Sigmoid colon (tissue), 7 donors: ENCODE measurements at regions of chr2 and their contacts with region 1.

Region 1: GRCh38 chr2:182359990-182360662 is 66.7 kb downstream of the PDE1A start:
- DNase-seq: peak; percentile 82
- H3K4me3 ChIP-seq: peak overlapping the region in 2 of 4 donors; percentile 1 to 12
- H3K27ac ChIP-seq: peak overlapping the region; percentile 42 to 71 (median 66)
- H3K4me1 ChIP-seq: peaks cover 0 to 25% (median 10%) of the 10 kb centered on the region in 4 donors
- H3K27me3 ChIP-seq: no peaks in the 10 kb centered on the region
- CTCF ChIP-seq: no peak
- EP300 ChIP-seq: no peak
- POLR2A ChIP-seq: no peak

Region 2: GRCh38 chr2:182545420-182546167 is 185.5 kb after region 1 on chr2:
- intact Hi-C with region 1: loop called (anchors 10 kb)
- DNase-seq: no peak
- H3K4me3 ChIP-seq: no peak overlapping the region
- H3K27ac ChIP-seq: peak overlapping the region in 3 of 4 donors; percentile 48 to 60 (median 51)
- H3K4me1 ChIP-seq: peaks cover 0 to 43% (median 27%) of the 10 kb centered on the region in 4 donors
- H3K27me3 ChIP-seq: no peaks in the 10 kb centered on the region
- CTCF ChIP-seq: no peak
- EP300 ChIP-seq: no peak
- POLR2A ChIP-seq: no peak

Region 3: DNA sequence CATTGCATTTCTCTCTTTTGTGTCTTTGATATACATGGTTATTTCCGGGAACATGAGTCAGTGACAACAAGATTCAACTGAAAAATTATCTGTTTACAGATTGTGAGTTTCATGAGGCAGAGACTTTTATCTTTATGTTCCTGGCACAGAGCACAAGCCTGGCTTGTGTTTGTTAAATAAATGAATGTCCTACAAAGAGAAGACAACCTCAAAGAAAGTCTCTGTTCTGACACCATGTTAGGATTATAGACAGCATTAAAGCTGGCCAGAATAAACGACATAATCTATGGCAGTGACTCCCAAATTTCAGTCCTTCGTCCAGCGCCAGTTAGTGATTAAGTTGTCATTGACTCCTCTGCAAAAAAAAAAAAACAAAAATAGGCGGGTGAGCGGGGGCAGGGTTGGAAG is 258.6 kb after region 1 on chr2:
- intact Hi-C with region 1: loop called (anchors 2 kb)
- DNase-seq: no peak
- H3K4me3 ChIP-seq: no peak overlapping the region
- H3K27ac ChIP-seq: peak overlapping the region in 1 of 4 donors; percentile 39
- H3K4me1 ChIP-seq: peaks cover 0 to 63% (median 34%) of the 10 kb centered on the region in 4 donors
- H3K27me3 ChIP-seq: no peaks in the 10 kb centered on the region
- CTCF ChIP-seq: no peak
- EP300 ChIP-seq: peak in 2 of 4 donors; percentile 65 to 69
- POLR2A ChIP-seq: no peak

Region 4: GRCh38 chr2:182784777-182785176 is 424.7 kb after region 1 on chr2:
- intact Hi-C with region 1: no loop called
- DNase-seq: no peak
- H3K4me3 ChIP-seq: no peak overlapping the region
- H3K27ac ChIP-seq: no peak overlapping the region
- H3K4me1 ChIP-seq: no peaks in the 10 kb centered on the region
- H3K27me3 ChIP-seq: no peaks in the 10 kb centered on the region
- CTCF ChIP-seq: peak in 3 of 4 experiments; percentile 35 to 52 (median 48)
- EP300 ChIP-seq: no peak
- POLR2A ChIP-seq: no peak